ENCODE measurements at regions of chr5 and their contacts with region 1.

Region 1: GRCh38 chr5:142542906-142543305 is 143.0 kb downstream of the FGF1 start:
- DNase-seq: no peak
- H3K4me3 ChIP-seq: no peak overlapping the region
- CTCF ChIP-seq: no peak

Region 2: GRCh38 chr5:141945511-141946051 is 597.3 kb before region 1 on chr5:
- in situ Hi-C with region 1: no loop called
- DNase-seq: no peak
- H3K4me3 ChIP-seq: no peak overlapping the region
- CTCF ChIP-seq: no peak

Region 3: DNA sequence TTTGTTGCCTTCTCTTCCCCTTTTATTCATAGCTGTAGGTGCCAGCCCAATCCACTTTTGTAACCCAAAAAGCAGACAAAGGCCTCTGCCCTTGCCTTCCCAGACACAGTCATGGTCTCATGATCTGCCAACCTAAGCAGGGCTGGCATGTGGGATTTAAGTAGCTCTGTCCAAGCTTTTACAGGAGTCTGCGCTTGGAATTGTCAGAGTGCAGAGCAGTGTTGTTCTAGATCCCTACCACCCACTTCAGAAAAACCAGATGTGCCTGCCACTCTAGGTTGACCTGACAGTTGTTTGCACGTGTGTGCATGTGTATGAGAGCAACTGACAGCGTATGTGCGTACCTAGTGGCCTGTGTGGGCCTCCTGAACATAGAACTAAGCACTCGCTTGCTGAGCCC is 130.3 kb before region 1 on chr5:
- in situ Hi-C with region 1: loop called (anchors 5 kb)
- DNase-seq: no peak
- H3K4me3 ChIP-seq: no peak overlapping the region
- CTCF ChIP-seq: no peak

Region 4: GRCh38 chr5:142584891-142585290 is 42.0 kb after region 1 on chr5:
- in situ Hi-C with region 1: loop called (anchors 5 kb)
- DNase-seq: peak; percentile 11
- H3K4me3 ChIP-seq: no peak overlapping the region
- CTCF ChIP-seq: no peak

Measured in astrocyte of the cerebellum (primary cell).